ENCODE measurements at regions of chr14 and their contacts with region 1.

Region 1: DNA sequence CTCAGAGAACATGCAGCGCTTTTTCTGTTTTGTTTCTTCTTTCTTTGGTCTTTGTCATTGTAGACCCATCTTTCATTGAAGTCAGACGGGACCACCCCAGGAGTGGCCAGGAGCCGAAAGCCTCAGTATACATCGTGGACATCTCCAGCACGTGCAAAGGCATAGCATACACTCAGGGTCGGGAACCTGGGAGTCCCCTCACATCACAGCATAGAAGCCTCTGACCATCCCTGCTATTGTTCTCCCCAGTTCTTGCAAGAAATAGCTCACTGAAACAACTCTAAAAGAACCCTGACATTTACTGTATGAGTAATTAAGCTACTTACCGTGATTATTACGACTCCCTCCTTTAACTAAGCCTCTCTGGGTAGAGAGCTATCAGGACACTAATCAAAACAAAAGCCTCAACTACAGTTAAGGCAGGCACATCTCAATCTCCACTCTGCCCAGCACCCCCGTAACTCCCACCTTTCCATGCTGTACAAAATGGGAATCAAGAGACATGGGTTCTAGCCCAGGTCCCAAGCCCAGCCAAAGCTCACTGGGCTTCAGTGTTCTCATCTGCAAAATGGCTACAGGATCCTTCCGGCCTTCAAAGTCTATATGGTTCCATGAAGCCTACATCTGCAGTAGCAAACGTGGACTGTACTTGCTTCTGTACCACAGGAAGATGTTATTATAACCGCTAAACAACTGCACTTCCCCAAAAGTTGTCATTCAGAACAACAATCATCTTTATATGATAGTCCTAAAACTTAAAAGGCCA is 6.7 kb downstream of the CCDC88C start:
- DNase-seq: peak in 4 of 14 experiments; percentile 22 to 70 (median 47)
- ATAC-seq: no peak
- H3K4me3 ChIP-seq: peak overlapping the region; percentile 34
- H3K4me3 Mint-ChIP-seq: peak overlapping the region; percentile 89
- H3K27ac ChIP-seq: peak overlapping the region; percentile 85 to 88
- H3K27ac Mint-ChIP-seq: peak overlapping the region; percentile 98
- H3K4me1 ChIP-seq: peaks cover 96% of the 10 kb centered on the region
- H3K4me1 Mint-ChIP-seq: peaks cover 90% of the 10 kb centered on the region
- H3K27me3 ChIP-seq: no peaks in the 10 kb centered on the region
- H3K27me3 Mint-ChIP-seq: no peaks in the 10 kb centered on the region
- CTCF ChIP-seq: no peak

Region 2: DNA sequence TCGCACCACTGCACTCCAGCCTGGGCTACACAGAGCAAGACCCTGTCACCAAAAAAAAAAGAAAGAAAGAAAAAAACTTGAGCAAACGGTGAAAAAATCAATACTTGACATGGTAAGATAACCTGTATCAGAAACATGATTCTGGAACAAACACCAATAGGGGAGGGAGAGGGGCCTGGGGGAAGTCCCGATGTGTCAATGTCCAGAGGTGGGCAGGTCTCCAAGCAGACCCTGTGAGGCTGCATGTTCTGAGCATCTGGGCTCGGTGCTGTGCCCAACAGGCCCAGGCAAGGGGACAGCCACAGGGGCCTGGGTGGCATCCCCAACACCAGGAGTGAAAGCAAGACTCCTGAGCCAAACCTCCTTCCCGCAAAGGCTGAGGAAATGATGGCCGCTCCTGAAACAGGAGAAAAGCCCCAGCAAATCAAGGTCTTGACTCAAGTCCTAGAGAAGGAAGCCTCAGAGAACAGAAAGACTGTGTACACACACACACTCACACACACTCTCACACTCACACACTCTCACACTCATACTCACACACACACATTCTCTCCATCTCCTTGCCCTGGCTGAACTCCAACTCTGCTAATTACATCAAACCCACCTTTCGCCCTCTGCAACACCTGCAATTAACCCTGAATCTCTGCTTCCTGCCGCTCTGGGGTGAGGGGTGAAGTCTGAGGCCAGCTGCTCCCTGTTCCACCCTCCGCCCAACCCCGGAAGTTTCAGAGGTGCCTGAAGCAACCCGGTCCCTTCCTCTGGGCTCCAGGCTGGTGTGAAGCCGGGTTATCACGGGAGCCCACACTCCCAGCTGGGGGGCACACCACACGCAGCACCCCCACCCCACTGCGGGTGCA is 13.8 kb before region 1 on chr14:
- CTCF ChIA-PET with region 1: interaction called, 62 read pairs
- POLR2A ChIA-PET with region 1: interaction called, 294 read pairs
- intact Hi-C with region 1: loop called (anchors 1 to 2 kb)
- DNase-seq: peak in 13 of 14 experiments; percentile 48 to 87 (median 64)
- ATAC-seq: peak; percentile 76
- H3K4me3 ChIP-seq: peak overlapping the region; percentile 67
- H3K4me3 Mint-ChIP-seq: peak overlapping the region; percentile 78
- H3K27ac ChIP-seq: peak overlapping the region; percentile 26 to 66
- H3K27ac Mint-ChIP-seq: peak overlapping the region; percentile 98
- H3K4me1 ChIP-seq: peaks cover 98% of the 10 kb centered on the region
- H3K4me1 Mint-ChIP-seq: peaks cover 90% of the 10 kb centered on the region
- H3K27me3 ChIP-seq: no peaks in the 10 kb centered on the region
- H3K27me3 Mint-ChIP-seq: no peaks in the 10 kb centered on the region
- CTCF ChIP-seq: no peak